Activated naive CD4-positive, alpha-beta T cell treated with anti-CD3 and anti-CD28 coated beads for 36 hours (primary cell): ENCODE measurements at regions of chr13 and their contacts with region 1.

Region 1: DNA sequence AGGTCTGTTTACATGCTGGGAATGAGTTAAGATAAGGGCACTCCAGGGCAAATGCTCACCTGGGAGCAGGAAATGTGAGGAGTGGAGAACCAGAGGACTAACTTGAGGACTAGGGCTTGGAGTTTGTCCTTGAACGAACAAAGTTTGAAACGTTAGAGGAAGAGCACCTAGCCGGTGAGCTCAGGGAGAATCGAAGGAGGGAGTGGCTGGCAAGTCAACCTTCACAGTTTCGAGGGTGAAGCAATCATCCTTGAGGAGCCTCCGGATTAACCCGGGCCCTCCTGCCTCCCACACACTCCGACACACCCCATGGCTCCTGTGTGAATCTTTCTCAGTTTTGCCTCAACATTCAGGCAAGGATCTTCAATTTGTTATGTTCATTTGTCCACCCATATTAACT is 58.6 kb downstream of the LMO7 start:
- DNase-seq: no peak
- H3K4me3 Mint-ChIP-seq: no peak overlapping the region
- H3K27ac Mint-ChIP-seq: no peak overlapping the region
- H3K4me1 Mint-ChIP-seq: peaks cover 4% of the 10 kb centered on the region
- H3K27me3 Mint-ChIP-seq: no peaks in the 10 kb centered on the region

Region 2: GRCh38 chr13:75704579-75705320 is 10.0 kb after region 1 on chr13:
- CTCF ChIA-PET with region 1: interaction called, 14 read pairs
- intact Hi-C with region 1: no loop called
- DNase-seq: no peak
- H3K4me3 Mint-ChIP-seq: no peak overlapping the region
- H3K27ac Mint-ChIP-seq: no peak overlapping the region
- H3K4me1 Mint-ChIP-seq: peaks cover 14% of the 10 kb centered on the region
- H3K27me3 Mint-ChIP-seq: no peaks in the 10 kb centered on the region

Region 3: DNA sequence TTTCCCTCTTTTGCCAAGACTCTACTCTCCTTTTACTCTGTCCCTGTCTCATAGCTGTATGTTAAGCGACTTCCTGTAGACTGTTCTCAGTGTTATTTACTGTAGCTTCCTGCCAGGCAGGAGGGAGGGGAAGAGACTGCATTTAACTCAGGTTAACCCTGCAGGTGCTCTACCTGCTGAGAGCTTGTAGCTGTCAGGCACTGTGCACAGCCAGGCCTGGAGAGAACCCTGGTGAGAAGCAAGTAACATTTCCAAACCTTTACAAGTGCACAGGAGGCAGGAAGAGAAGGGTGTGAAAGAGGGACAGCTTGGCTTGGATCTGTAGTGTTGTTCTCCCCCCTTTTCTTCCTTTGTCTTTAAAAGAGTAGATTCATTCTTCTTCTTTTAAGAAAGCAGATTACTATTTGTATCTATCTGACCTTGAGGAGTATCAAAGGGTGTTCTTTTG is 108.5 kb after region 1 on chr13:
- CTCF ChIA-PET with region 1: interaction called, 22 read pairs
- intact Hi-C with region 1: loop called (anchors 1 kb)
- DNase-seq: peak; percentile 44
- H3K4me3 Mint-ChIP-seq: peak overlapping the region; percentile 35
- H3K27ac Mint-ChIP-seq: peak overlapping the region; percentile 48
- H3K4me1 Mint-ChIP-seq: peaks cover 51% of the 10 kb centered on the region
- H3K27me3 Mint-ChIP-seq: no peaks in the 10 kb centered on the region

Region 4: DNA sequence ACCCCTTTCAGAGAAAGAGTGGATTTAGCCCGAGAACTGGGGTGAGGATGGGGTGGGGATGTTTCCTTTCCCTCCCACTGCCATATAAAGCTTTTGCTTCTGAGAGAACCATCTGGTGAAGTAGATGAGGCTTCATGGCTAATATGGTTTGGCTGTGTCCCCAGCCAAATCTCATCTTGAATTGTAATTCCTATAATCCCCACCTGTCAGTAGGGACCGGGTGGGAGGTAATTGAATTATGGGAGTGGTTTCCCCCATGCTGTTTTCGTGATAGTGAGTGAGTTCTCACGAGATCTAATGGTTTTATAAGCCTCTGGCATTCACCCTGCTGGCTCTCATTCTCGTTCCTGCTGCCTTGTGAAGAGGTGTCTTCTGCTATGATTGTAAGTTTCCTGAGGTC is 212.3 kb after region 1 on chr13:
- CTCF ChIA-PET with region 1: interaction called, 5 read pairs
- intact Hi-C with region 1: loop called (anchors 1 kb)
- DNase-seq: no peak
- H3K4me3 Mint-ChIP-seq: no peak overlapping the region
- H3K27ac Mint-ChIP-seq: no peak overlapping the region
- H3K4me1 Mint-ChIP-seq: no peaks in the 10 kb centered on the region
- H3K27me3 Mint-ChIP-seq: peaks cover 5% of the 10 kb centered on the region

Region 5: DNA sequence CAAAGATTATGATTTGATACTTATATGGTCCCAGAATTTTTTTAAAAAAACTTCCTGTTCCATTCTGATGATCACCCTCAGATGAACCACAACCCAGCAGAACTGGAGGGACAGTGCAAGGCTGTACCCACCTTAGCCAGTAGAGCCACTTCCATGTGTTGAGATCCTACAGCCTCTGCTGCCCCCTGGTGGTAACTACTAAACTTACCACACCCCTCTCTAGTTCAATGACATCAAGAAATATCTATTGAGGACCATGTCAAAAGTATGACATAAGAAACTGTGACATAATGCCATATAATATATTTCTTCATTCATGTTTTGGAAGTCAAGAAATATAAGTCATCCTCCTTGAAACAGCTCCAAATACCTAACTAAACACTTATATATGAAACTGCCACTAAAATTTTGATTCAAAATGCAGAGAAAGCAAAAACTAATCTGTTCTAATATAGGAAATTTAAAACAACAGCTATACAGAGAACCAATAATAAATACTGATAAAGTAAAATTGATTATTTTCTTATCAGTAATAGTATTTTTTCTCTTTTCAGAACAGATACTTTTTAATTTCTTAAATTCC is 778.9 kb after region 1 on chr13:
- CTCF ChIA-PET with region 1: interaction called, 11 read pairs
- intact Hi-C with region 1: loop called (anchors 1 kb)
- DNase-seq: peak; percentile 85
- H3K4me3 Mint-ChIP-seq: no peak overlapping the region
- H3K27ac Mint-ChIP-seq: no peak overlapping the region
- H3K4me1 Mint-ChIP-seq: no peaks in the 10 kb centered on the region
- H3K27me3 Mint-ChIP-seq: peaks cover 5% of the 10 kb centered on the region